Gastrocnemius medialis (tissue), 4 donors: ENCODE measurements at regions of chr13 and their contacts with region 1.

Region 1: DNA sequence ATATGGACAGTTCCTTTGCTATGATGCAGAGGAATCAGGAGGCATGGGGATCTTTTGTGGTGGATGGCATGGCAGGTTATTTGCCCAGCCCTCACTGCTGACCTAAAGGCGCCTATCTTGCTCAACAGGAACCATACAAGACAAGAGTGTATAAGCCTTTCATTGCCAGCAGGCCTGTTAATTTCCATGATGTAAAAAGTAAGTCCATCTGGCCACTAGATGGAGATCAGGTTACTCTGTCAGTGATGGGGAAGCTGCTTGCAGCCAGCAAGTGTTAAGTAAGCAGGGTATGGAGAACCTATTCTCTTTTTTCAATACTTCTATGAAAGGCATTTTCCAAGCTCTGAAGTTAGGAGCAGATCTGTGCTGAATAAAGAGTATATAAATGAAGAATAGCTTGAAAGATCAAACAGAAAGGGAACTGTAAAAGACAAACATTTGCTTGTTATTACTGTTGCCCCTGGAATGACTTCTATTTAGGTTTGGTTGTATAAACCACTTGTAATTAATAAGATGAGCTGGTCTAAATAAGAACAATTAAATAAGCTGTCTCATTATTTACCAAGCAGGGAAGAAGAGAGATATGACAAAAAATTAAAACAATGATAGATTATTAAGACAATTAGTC is 210.9 kb downstream of the RGCC start:
- DNase-seq: peak; percentile 80 to 83
- ATAC-seq: peak; percentile 100
- H3K4me3 ChIP-seq: no peak overlapping the region
- H3K27ac ChIP-seq: peak overlapping the region in 3 of 4 donors; percentile 60 to 73 (median 63)
- H3K4me1 ChIP-seq: peaks cover 12 to 19% of the 10 kb centered on the region in 2 donors
- H3K27me3 ChIP-seq: no peaks in the 10 kb centered on the region
- CTCF ChIP-seq: peak; percentile 54 to 74 (median 68)
- POLR2A ChIP-seq: no peak

Region 2: DNA sequence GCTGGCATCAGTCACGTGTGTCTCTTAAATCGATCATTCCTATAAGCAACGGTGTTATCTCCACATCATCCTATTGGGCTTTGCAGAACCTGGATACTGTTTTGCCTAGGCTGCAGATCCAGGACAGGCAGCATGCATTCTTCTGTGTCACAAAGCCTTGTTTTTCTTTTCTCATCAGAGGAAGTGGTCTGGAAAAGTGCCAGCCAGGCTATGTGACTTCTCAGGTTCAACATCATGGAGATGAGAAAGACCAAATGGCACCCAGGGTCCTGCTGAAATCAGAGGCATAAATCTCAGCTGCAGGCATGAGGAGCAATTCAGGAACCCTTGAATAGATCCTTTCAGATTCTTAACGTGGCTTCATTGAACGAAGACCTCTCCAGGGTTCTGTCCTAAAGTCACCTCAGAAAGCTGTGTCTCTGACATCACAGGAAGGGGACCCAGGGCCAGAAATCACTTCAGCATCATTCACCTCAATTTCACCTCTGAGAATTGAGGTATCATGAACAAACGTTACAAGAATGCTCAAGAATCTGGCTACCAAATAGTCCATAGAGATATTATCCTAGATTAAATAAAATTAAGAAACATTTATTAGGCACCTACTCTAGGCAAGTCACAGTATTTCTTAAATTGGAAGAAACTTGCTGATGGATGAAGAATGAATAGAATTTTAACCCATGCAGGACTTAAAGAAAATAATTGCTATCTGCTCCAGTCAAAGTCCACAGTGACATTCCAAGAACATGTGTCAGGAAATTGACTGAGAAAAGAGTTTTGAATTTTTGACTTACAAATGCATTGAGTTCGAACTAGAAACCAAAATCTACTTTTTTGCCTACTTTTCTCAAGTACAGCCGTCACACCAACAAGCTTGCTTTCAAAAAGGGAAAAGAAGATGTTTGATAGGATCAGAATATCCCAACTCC is 1888.6 kb before region 1 on chr13:
- in situ Hi-C with region 1: no loop called
- intact Hi-C with region 1: no loop called
- DNase-seq: no peak
- ATAC-seq: no peak
- H3K4me3 ChIP-seq: no peak overlapping the region
- H3K27ac ChIP-seq: no peak overlapping the region
- H3K4me1 ChIP-seq: no peaks in the 10 kb centered on the region
- H3K27me3 ChIP-seq: no peaks in the 10 kb centered on the region
- CTCF ChIP-seq: no peak
- POLR2A ChIP-seq: no peak

Region 3: GRCh38 chr13:41352935-41353840 is 315.1 kb before region 1 on chr13:
- in situ Hi-C with region 1: loop called in 2 of 4 experiments (anchors 25 kb)
- intact Hi-C with region 1: no loop called
- DNase-seq: no peak
- ATAC-seq: peak; percentile 30 to 58
- H3K4me3 ChIP-seq: no peak overlapping the region
- H3K27ac ChIP-seq: no peak overlapping the region
- H3K4me1 ChIP-seq: peaks cover 12 to 13% of the 10 kb centered on the region in 2 donors
- H3K27me3 ChIP-seq: no peaks in the 10 kb centered on the region
- CTCF ChIP-seq: peak; percentile 58 to 86 (median 72)
- POLR2A ChIP-seq: no peak

Region 4: DNA sequence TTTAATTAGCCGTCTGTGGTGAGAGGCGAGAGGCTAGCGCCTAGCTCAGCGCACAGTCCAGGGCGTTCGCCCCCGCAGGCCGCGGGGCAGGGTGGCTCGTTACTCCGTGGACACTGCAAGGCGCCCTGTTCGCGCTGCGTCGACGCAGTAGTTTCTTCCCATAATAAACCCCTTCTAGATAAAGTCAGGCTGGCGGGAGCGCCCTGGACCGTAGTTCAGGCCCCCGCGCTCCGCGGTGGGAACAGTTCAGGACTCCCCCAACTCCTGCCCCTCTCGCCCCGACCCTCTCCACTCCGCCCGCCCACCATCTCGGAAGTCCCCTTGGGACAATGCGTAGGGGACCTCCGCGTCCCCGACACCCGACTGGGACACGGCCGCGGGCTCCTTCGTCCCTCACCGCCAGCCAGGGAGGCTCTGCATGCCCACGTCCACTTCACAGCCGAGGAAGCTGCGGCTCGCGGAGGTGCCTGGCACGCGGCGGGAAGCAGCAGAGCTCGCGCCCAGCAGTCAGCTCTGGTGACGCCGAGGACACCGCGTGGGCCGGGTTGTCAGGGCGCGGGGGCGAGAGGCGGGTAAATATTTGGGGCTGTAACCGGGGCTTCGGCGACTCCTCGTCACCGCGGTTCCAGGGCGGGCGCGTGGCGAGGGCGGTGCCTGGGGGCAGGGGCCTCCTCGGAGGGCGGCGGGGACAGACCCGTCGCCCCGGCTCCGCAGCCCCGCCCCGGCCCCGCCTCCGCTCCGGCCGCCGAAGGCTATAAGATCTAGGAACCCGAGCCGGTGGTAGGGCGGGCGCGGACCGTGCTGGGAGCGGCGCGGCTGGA is 211.3 kb before region 1 on chr13 and contains the start of gene RGCC:
- in situ Hi-C with region 1: loop called in 1 of 4 experiments (anchors 25 kb)
- intact Hi-C with region 1: no loop called
- DNase-seq: peak; percentile 17 to 45
- ATAC-seq: peak; percentile 53 to 72
- H3K4me3 ChIP-seq: peak within 1 kb of the TSS; percentile 66 to 76 (median 70)
- H3K27ac ChIP-seq: peak within 1 kb of the TSS; percentile 47 to 70 (median 62)
- H3K4me1 ChIP-seq: peaks cover 4 to 11% of the 10 kb centered on the region in 2 donors
- H3K27me3 ChIP-seq: peaks cover 18 to 36% (median 25%) of the 10 kb centered on the region in 3 donors
- CTCF ChIP-seq: no peak
- POLR2A ChIP-seq: peak in 1 of 2 donors; percentile 82
- total RNA-seq, gene RGCC: 56.1 to 135 (median 92.0) TPM

Region 5: DNA sequence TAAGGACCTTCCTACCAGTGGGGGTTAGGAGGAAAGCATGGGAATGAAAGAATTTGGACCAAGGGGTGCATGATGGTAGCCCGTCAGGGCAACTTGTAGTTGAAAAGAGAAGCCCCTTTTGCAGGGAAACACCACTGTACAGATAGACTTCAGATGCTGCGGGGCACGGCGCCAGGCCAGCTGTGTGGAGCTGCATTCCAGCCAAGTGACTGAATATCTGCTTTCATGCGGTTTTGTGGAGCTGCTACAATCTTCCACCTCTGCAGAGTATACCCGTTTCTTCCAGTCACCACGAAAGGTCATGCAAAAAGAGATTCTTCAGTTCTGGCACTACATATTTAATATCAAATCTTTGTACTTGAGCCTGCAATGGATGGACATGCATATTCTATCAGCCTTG is 106.2 kb before region 1 on chr13:
- in situ Hi-C with region 1: no loop called
- intact Hi-C with region 1: no loop called
- DNase-seq: peak in 1 of 2 donors; percentile 39
- ATAC-seq: peak; percentile 25 to 47
- H3K4me3 ChIP-seq: no peak overlapping the region
- H3K27ac ChIP-seq: no peak overlapping the region
- H3K4me1 ChIP-seq: peaks cover 0 to 21% of the 10 kb centered on the region in 2 donors
- H3K27me3 ChIP-seq: no peaks in the 10 kb centered on the region
- CTCF ChIP-seq: no peak
- POLR2A ChIP-seq: no peak

Region 6: GRCh38 chr13:41708713-41709112 is 40.5 kb after region 1 on chr13:
- in situ Hi-C with region 1: no loop called
- intact Hi-C with region 1: loop called (anchors 5 kb)
- DNase-seq: peak in 1 of 2 donors; percentile 19
- ATAC-seq: peak; percentile 21 to 38
- H3K4me3 ChIP-seq: no peak overlapping the region
- H3K27ac ChIP-seq: peak overlapping the region in 3 of 4 donors; percentile 9 to 83 (median 18)
- H3K4me1 ChIP-seq: peaks cover 52 to 54% of the 10 kb centered on the region in 2 donors
- H3K27me3 ChIP-seq: no peaks in the 10 kb centered on the region
- CTCF ChIP-seq: no peak
- POLR2A ChIP-seq: no peak

Region 7: GRCh38 chr13:42039946-42040729 is 371.9 kb after region 1 on chr13:
- in situ Hi-C with region 1: loop called in 1 of 4 experiments (anchors 10 kb)
- intact Hi-C with region 1: loop called (anchors 2 kb)
- DNase-seq: peak; percentile 89
- ATAC-seq: peak; percentile 84 to 86
- H3K4me3 ChIP-seq: peak overlapping the region; percentile 72 to 95 (median 80)
- H3K27ac ChIP-seq: peak overlapping the region; percentile 88 to 98 (median 92)
- H3K4me1 ChIP-seq: peaks cover 0 to 10% of the 10 kb centered on the region in 2 donors
- H3K27me3 ChIP-seq: no peaks in the 10 kb centered on the region
- CTCF ChIP-seq: peak in 1 of 5 experiments; percentile 18
- POLR2A ChIP-seq: peak; percentile 90 to 96

Region 8: DNA sequence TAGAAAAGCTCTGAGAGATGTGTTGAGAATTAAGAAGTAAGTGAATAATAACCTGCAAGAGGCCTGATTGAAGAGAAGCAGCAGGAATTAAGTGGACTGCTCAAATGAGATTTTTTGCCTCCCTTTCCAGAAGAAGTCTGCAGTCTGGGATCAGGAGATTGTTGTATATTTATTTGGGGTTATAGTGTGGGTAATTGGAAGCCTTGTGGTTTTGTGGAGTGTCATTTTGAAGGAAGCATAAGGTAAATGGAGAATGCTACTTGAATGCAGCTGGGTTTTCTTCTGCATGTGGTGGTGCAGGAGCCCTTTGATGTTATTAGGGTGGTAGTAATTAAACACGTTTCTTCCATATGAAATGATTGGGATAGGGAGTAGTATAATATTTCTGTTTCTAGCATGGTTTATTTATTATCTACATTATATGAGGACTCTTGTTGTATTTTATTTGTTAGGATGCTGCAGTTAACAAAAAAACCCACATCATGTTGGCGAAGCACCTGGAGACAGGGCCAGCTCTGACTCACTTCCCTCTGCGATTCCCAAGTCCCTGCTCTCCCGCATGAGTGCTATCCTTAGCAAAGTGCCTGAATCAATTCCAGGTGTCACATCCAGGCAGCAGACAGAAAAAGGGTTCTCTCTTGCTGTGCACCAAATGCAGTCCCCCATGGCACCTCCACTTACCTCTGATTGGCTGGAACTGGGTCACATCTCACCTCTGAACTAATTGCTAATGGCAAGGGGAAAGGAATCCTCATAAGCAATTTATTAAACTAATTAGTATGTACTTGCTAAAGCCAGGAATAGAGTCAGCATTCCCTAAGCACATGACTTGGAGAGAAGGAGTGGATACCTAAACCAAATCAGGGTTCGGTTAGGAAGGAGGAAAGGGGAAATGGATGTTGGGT is 435.0 kb after region 1 on chr13:
- in situ Hi-C with region 1: loop called in 2 of 4 experiments (anchors 10 to 25 kb)
- intact Hi-C with region 1: no loop called
- DNase-seq: no peak
- ATAC-seq: no peak
- H3K4me3 ChIP-seq: no peak overlapping the region
- H3K27ac ChIP-seq: no peak overlapping the region
- H3K4me1 ChIP-seq: peaks cover 5 to 7% of the 10 kb centered on the region in 2 donors
- H3K27me3 ChIP-seq: no peaks in the 10 kb centered on the region
- CTCF ChIP-seq: no peak
- POLR2A ChIP-seq: no peak

Region 9: DNA sequence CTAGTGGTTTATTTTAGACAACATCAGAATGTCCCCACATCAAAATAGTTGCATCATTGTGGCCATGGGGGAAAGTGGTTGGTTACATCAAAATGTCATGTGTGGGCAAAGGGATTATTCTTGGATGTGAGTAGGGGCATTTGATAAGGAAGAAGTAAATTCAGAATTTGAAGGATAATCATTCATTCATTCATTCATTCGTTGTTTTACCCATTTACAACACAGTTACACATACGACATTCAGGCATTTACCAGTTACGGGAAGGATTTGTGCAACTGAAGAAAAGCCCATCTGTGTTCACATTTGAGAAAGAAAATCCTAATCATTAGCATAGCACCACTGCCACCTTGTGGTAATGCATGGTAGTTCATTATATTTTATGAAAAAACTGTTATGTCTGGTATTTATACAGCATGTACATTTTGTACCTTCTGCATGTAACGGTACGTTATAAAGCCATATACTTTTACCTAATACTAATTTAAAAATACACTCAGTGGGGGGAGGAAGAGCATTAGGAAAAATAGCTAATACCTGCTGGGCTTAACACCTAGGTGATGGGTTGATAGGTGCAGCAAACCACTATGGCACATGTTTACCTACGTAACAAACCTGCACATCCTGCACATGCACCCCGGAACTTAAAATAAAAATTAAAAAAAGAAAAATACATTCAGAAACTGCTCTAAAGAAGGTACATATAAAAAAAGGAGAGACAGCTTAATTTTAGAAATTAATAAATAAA is 442.3 kb after region 1 on chr13:
- in situ Hi-C with region 1: loop called in 3 of 4 experiments (anchors 5 to 25 kb)
- intact Hi-C with region 1: loop called (anchors 1 kb)
- DNase-seq: no peak
- ATAC-seq: peak; percentile 60 to 67
- H3K4me3 ChIP-seq: no peak overlapping the region
- H3K27ac ChIP-seq: no peak overlapping the region
- H3K4me1 ChIP-seq: peaks cover 3 to 10% of the 10 kb centered on the region in 2 donors
- H3K27me3 ChIP-seq: no peaks in the 10 kb centered on the region
- CTCF ChIP-seq: peak; percentile 76 to 86 (median 82)
- POLR2A ChIP-seq: no peak